Colonic mucosa (tissue), 4 donors: ENCODE measurements at regions of chr5 and their contacts with region 1.

Region 1: DNA sequence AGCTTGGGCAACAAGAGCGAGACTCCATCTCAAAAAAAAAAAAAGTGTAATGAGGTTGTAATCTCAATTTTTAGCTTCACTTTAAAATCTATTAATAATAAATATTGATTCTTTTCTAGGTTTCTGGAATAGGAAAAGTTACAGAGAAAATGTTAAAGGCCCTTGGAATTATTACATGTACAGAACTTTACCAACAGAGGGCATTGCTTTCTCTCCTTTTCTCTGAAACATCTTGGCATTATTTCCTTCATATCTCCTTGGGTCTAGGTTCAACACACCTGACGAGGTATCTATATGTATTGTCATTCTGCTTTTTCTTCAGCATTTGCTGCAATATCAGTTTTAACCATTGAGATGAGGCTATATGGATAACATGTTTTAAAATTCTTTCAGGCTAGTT is 26.6 kb upstream of the ANKDD1B start:
- DNase-seq: no peak
- H3K4me3 ChIP-seq: no peak overlapping the region
- H3K27ac ChIP-seq: no peak overlapping the region
- H3K4me1 ChIP-seq: no peaks in the 10 kb centered on the region
- H3K27me3 ChIP-seq: no peaks in the 10 kb centered on the region
- CTCF ChIP-seq: no peak

Region 2: GRCh38 chr5:75681125-75681830 is 96.6 kb after region 1 on chr5:
- intact Hi-C with region 1: loop called (anchors 5 kb)
- DNase-seq: no peak
- H3K4me3 ChIP-seq: no peak overlapping the region
- H3K27ac ChIP-seq: no peak overlapping the region
- H3K4me1 ChIP-seq: no peaks in the 10 kb centered on the region
- H3K27me3 ChIP-seq: no peaks in the 10 kb centered on the region
- CTCF ChIP-seq: peak; percentile 70

Region 3: GRCh38 chr5:76125888-76126287 is 541.2 kb after region 1 on chr5:
- intact Hi-C with region 1: no loop called
- DNase-seq: peak; percentile 40
- H3K4me3 ChIP-seq: no peak overlapping the region
- H3K27ac ChIP-seq: peak overlapping the region; percentile 12
- H3K4me1 ChIP-seq: no peaks in the 10 kb centered on the region
- H3K27me3 ChIP-seq: no peaks in the 10 kb centered on the region
- CTCF ChIP-seq: no peak